Activated CD4-positive, alpha-beta T cell treated with anti-CD3 and anti-CD28 coated beads for 36 hours (primary cell): ENCODE measurements at regions of chr1 and their contacts with region 1.

Region 1: GRCh38 chr1:236581528-236581927 is 22.8 kb downstream of the HEATR1 start:
- DNase-seq: no peak
- ATAC-seq: no peak
- H3K4me3 Mint-ChIP-seq: no peak overlapping the region
- H3K27ac Mint-ChIP-seq: no peak overlapping the region
- H3K4me1 Mint-ChIP-seq: no peaks in the 10 kb centered on the region
- H3K27me3 Mint-ChIP-seq: no peaks in the 10 kb centered on the region

Region 2: GRCh38 chr1:236247286-236247685 is 334.2 kb before region 1 on chr1:
- CTCF ChIA-PET with region 1: no interaction called
- POLR2A ChIA-PET with region 1: no interaction called
- intact Hi-C with region 1: no loop called
- DNase-seq: no peak
- ATAC-seq: no peak
- H3K4me3 Mint-ChIP-seq: no peak overlapping the region
- H3K27ac Mint-ChIP-seq: no peak overlapping the region
- H3K4me1 Mint-ChIP-seq: no peaks in the 10 kb centered on the region
- H3K27me3 Mint-ChIP-seq: no peaks in the 10 kb centered on the region

Region 3: DNA sequence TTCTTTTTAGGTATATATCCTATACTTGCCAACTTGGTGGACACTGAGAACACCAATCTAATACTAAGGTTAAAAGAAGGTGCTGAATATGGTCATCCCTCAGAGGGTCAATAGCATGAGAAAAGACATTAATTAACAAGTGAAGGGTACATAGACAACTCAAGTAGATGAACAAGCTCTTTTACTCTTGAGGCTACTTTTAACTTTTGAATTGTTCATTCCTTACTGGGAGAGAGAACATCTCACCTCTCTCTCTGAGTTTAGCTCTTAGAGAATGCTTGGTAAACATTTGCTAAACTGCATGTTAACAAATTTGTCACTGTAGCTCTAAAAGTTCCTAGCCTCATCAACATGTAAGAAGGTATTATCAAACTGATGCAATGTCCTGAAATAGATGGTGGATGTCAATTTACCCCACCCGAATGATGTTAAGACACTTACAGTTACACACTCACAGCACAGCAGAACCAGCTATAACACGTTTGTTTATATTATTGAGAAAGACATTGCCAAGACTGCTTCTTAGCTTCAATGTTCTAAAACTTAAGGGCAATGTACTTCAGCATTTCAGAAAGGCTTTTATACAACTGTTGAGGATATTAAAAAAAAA is 13.1 kb before region 1 on chr1:
- CTCF ChIA-PET with region 1: interaction called, 4 read pairs
- POLR2A ChIA-PET with region 1: no interaction called
- intact Hi-C with region 1: loop called in 1 of 2 experiments (anchors 2 kb)
- DNase-seq: no peak
- ATAC-seq: no peak
- H3K4me3 Mint-ChIP-seq: no peak overlapping the region
- H3K27ac Mint-ChIP-seq: no peak overlapping the region
- H3K4me1 Mint-ChIP-seq: peaks cover 2% of the 10 kb centered on the region
- H3K27me3 Mint-ChIP-seq: no peaks in the 10 kb centered on the region

Region 4: GRCh38 chr1:236716160-236716559 is 134.6 kb after region 1 on chr1:
- CTCF ChIA-PET with region 1: no interaction called
- POLR2A ChIA-PET with region 1: no interaction called
- intact Hi-C with region 1: no loop called
- DNase-seq: no peak
- ATAC-seq: no peak
- H3K4me3 Mint-ChIP-seq: no peak overlapping the region
- H3K27ac Mint-ChIP-seq: no peak overlapping the region
- H3K4me1 Mint-ChIP-seq: no peaks in the 10 kb centered on the region
- H3K27me3 Mint-ChIP-seq: peaks cover 13% of the 10 kb centered on the region